ENCODE measurements at regions of chr14 and their contacts with region 1.

Region 1: GRCh38 chr14:101876555-101876938 is 87.8 kb upstream of the DYNC1H1 start:
- DNase-seq: peak; percentile 34 to 92 (median 64)
- ATAC-seq: peak; percentile 93
- H3K4me3 ChIP-seq: peak overlapping the region; percentile 27
- H3K4me3 Mint-ChIP-seq: peak overlapping the region; percentile 61
- H3K27ac ChIP-seq: peak overlapping the region; percentile 56 to 64
- H3K27ac Mint-ChIP-seq: peak overlapping the region; percentile 79
- H3K4me1 ChIP-seq: peaks cover 60% of the 10 kb centered on the region
- H3K4me1 Mint-ChIP-seq: peaks cover 78% of the 10 kb centered on the region
- H3K27me3 ChIP-seq: no peaks in the 10 kb centered on the region
- H3K27me3 Mint-ChIP-seq: no peaks in the 10 kb centered on the region
- CTCF ChIP-seq: no peak

Region 2: DNA sequence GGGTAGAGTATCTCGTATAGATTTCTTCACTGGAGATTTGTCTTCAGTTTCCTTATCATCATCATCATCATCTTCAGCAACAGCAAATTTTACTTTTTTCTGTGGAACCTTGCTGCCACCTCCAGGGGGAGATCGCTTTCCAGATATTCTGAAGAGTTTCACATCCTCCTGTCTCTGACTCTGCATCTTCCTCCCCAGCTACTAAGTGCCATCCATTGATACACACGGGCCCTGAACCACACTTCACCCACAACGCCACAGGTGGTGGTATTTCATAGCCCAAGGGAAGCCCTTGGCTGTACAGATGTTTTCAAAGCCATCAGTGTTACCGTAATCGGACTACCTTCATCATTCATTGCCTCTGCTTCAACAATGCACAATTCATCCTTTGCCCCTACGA is 32.9 kb before region 1 on chr14:
- CTCF ChIA-PET with region 1: interaction called, 3 read pairs
- POLR2A ChIA-PET with region 1: no interaction called
- intact Hi-C with region 1: loop called in 1 of 2 experiments (anchors 5 kb)
- DNase-seq: peak in 12 of 14 experiments; percentile 29 to 88 (median 50)
- ATAC-seq: peak; percentile 79
- H3K4me3 ChIP-seq: no peak overlapping the region
- H3K4me3 Mint-ChIP-seq: peak overlapping the region; percentile 26
- H3K27ac ChIP-seq: peak overlapping the region in 1 of 2 donors; percentile 48
- H3K27ac Mint-ChIP-seq: peak overlapping the region; percentile 78
- H3K4me1 ChIP-seq: peaks cover 88% of the 10 kb centered on the region
- H3K4me1 Mint-ChIP-seq: peaks cover 87% of the 10 kb centered on the region
- H3K27me3 ChIP-seq: no peaks in the 10 kb centered on the region
- H3K27me3 Mint-ChIP-seq: no peaks in the 10 kb centered on the region
- CTCF ChIP-seq: peak; percentile 69

Region 3: GRCh38 chr14:101854366-101854765 is 22.2 kb before region 1 on chr14:
- CTCF ChIA-PET with region 1: interaction called, 6 read pairs
- POLR2A ChIA-PET with region 1: interaction called, 3 read pairs
- intact Hi-C with region 1: loop called in 1 of 2 experiments (anchors 2 kb)
- DNase-seq: peak in 5 of 14 experiments; percentile 24 to 62 (median 59)
- ATAC-seq: peak; percentile 87
- H3K4me3 ChIP-seq: no peak overlapping the region
- H3K4me3 Mint-ChIP-seq: peak overlapping the region; percentile 7
- H3K27ac ChIP-seq: peak overlapping the region in 1 of 2 donors; percentile 10
- H3K27ac Mint-ChIP-seq: peak overlapping the region; percentile 73
- H3K4me1 ChIP-seq: peaks cover 63% of the 10 kb centered on the region
- H3K4me1 Mint-ChIP-seq: peaks cover 93% of the 10 kb centered on the region
- H3K27me3 ChIP-seq: no peaks in the 10 kb centered on the region
- H3K27me3 Mint-ChIP-seq: no peaks in the 10 kb centered on the region
- CTCF ChIP-seq: no peak